Head of caudate nucleus (tissue), 42 donors: ENCODE measurements at regions of chr1 and their contacts with region 1.

Region 1: DNA sequence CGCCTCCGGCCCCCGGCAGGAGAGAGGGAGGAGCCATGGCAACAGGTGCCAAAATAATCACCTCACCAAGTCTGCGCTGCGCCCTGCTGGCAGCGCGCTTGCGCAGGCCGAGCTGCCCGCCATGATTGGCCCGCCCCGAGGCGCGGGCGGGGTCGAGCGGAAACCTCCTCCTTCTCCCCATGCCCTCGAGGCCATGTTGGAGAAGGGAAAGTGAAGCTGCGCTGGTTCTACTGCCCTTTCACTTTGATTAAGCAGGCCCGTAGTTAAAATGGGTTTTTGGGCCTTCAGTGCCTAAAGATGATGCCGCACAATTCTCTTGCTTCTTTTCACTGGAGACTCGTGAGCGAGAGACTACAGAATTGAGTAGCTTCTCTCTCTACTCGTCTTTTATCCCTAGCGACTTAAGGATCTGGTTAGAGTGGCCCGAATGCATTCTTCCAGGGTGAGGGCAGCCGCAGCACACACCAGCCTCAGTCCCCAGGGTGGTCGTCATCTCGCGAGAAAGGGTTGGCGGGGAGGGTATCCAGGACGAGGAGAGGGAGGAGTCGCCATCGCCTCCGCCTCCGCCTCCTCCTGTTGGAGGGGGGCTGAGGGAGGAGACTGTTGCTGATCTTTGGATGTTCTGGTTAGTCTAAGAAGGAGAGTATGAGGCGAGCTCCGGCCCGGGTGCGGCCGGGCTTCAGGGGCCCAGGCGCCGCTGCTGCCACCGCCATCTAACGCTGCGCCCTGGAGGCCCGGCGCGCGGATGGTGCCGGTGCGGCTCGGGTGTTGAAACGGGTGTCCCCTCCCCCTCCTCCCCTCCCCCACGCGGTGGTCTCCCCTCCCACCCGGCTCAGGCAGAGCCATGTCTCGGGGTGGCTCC is at the start of gene DCAF6:
- DNase-seq: peak; percentile 89 to 98 (median 95)

Region 2: DNA sequence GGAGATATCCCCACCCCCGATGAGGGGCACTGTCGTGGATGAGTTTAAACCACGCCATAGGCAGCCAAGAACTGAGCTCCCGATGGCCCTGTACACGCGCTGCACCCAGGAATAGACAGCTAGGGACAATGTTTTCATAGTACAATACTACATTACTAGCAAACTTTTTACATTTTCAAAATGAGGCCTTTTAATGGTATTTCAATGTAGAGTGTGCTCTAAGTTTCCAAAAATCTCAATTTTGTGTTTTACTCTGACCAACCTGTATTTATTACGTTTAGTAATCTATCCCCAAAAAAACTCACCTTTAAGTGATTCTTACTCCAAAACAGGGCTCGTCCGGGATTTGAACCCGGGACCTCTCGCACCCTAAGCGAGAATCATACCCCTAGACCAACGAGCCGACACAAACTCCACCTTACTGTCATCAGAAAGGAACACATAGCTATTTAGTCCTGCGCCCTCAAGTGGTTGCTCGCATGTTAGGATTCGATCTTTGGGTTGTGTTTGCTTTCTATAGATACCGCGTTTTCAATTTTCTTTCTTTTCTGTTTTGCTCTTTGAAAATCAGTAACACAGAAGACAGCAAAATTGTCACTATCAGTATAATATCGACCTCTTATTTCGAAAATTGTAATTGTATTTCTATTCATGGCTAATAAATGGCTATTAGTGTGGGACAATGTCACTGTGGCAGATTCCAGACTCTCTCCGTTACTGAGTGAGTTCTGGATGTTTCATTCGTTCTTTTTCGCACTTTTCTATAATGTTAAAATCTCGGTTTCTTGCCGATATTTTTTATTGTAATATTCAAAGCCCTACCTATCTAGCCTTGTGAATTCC is 220.9 kb before region 1 on chr1:
- intact Hi-C with region 1: loop called (anchors 5 kb)
- DNase-seq: peak; percentile 63 to 96 (median 89)

Region 3: DNA sequence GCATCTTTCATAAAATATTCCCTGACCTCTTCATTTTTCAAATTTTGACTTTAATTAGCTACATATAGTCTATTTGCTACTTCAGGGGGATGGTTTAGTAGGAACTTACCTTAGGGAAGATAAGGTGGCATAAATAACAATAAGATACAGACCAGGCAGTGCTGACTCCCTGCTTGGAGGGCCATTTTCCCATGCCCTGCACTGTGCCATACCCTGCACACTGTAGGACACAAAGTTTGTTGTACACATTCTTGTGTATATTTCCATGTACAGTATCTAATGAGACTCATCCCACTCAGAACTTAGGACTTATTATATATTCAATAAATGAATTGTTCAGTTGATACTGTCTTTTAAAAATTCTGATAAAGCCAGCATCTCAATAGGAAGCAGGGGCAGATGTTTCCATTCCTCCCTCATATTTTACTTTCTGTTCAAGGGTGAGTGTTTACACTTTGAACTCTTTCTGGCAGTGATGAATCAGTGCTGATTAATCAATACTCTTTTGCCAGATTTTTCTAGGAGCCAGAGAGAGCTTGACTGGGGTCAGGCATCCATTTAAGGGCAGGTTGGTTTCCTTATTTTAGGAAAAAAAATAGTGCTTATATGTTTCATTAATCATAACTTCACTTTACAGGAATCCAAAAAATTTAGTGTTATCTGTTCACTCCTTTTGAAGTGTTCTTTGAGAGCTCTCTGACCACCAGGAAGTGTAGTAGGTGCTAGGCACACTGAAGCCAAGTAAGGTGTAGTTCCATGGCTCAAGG is 183.9 kb before region 1 on chr1:
- intact Hi-C with region 1: no loop called
- DNase-seq: no peak